ENCODE measurements at regions of chr21 and their contacts with region 1.

Region 1: DNA sequence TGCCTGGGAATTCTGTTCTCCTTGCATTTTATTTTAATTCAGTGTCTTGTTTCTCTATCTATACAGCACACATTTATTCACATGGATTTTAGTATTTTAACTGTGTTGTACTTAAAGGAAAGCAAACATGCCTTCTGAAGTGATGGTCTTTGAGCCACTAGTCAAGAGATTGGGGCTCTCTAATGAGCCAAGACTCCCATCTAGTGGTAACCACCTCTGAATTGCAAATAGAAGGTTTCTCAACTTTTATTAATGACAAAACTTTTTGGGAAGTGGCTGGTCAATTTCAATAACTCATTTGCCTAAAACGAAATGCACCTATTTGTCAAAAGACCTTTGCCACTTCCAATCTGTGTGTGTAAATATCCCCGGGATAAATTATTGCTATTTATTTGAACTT is 199.6 kb downstream of the LTN1 start:
- DNase-seq: peak; percentile 49
- ATAC-seq: peak; percentile 25; the same call in 1 of the 2 replicates
- H3K4me3 ChIP-seq: no peak overlapping the region
- H3K27ac ChIP-seq: no peak overlapping the region
- H3K4me1 ChIP-seq: peaks cover 23% of the 10 kb centered on the region
- H3K27me3 ChIP-seq: no peaks in the 10 kb centered on the region
- CTCF ChIP-seq: peak; percentile 66

Region 2: DNA sequence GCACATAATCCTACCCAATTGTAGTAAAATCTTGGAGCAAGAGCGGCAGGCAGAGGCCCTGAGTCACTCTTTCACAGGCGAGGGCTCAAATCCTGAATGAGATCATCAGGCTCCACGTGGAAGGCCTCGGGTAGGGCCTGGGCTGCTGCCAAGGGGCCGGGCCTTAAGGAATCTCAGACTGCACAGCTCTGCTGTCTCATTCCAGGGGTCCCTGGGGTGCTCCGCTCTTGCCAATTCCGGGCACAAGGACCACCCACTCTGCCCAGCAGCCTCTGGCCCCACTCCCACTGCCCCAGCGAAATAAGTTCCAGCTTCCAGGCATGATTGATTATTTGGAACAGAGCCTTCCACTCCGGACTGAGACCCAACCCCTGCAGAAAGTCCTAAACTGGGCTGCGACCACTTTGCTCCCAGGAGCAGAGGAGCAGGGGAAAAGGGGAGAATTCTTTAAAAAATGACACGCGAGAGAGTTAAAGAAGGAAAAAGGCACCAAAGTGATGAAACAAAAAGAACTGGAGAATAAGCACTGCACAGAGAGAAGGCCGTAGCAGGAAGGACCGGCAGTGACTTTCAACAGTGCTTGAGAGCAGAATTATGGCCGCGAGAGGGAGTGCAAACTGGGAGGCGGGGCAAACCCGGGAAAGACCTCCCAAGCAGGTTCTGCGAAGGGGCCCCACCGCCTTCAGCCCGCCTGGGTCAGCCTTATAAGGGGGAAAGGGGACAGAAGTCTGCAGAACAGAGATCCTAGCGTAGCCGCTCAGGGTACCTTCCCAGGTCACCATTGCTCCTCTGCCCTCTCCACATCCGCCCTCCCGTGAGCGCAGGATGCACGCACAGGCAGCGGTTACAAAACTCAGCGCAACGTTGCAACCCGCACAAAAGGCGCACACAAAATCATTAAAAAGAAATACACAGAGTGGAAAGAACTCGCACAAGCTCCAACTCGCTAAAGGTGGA is 1949.8 kb before region 1 on chr21:
- CTCF ChIA-PET with region 1: no interaction called
- POLR2A ChIA-PET with region 1: no interaction called
- intact Hi-C with region 1: loop called (anchors 5 kb)
- DNase-seq: peak; percentile 96
- ATAC-seq: peak; percentile 58
- H3K4me3 ChIP-seq: peak overlapping the region; percentile 78
- H3K27ac ChIP-seq: peak overlapping the region; percentile 66
- H3K4me1 ChIP-seq: peaks cover 17% of the 10 kb centered on the region
- H3K27me3 ChIP-seq: no peaks in the 10 kb centered on the region
- CTCF ChIP-seq: 0 out of 2 replicates have a peak, but pooled peaks have one; percentile 35

Region 3: GRCh38 chr21:28633839-28634555 is 159.0 kb before region 1 on chr21:
- CTCF ChIA-PET with region 1: no interaction called
- POLR2A ChIA-PET with region 1: no interaction called
- intact Hi-C with region 1: loop called (anchors 5 kb)
- DNase-seq: peak; percentile 91
- ATAC-seq: peak; percentile 31
- H3K4me3 ChIP-seq: peak overlapping the region; percentile 11; the same call in 1 of the 2 replicates
- H3K27ac ChIP-seq: peak overlapping the region; percentile 97
- H3K4me1 ChIP-seq: peaks cover 70% of the 10 kb centered on the region
- H3K27me3 ChIP-seq: no peaks in the 10 kb centered on the region
- CTCF ChIP-seq: no peak

Region 4: GRCh38 chr21:28832013-28832714 is 39.1 kb after region 1 on chr21:
- CTCF ChIA-PET with region 1: no interaction called
- POLR2A ChIA-PET with region 1: no interaction called
- intact Hi-C with region 1: loop called (anchors 2 kb)
- DNase-seq: peak; percentile 83
- ATAC-seq: peak; percentile 94
- H3K4me3 ChIP-seq: no peak overlapping the region
- H3K27ac ChIP-seq: peak overlapping the region; percentile 27
- H3K4me1 ChIP-seq: peaks cover 31% of the 10 kb centered on the region
- H3K27me3 ChIP-seq: no peaks in the 10 kb centered on the region
- CTCF ChIP-seq: no peak

Region 5: DNA sequence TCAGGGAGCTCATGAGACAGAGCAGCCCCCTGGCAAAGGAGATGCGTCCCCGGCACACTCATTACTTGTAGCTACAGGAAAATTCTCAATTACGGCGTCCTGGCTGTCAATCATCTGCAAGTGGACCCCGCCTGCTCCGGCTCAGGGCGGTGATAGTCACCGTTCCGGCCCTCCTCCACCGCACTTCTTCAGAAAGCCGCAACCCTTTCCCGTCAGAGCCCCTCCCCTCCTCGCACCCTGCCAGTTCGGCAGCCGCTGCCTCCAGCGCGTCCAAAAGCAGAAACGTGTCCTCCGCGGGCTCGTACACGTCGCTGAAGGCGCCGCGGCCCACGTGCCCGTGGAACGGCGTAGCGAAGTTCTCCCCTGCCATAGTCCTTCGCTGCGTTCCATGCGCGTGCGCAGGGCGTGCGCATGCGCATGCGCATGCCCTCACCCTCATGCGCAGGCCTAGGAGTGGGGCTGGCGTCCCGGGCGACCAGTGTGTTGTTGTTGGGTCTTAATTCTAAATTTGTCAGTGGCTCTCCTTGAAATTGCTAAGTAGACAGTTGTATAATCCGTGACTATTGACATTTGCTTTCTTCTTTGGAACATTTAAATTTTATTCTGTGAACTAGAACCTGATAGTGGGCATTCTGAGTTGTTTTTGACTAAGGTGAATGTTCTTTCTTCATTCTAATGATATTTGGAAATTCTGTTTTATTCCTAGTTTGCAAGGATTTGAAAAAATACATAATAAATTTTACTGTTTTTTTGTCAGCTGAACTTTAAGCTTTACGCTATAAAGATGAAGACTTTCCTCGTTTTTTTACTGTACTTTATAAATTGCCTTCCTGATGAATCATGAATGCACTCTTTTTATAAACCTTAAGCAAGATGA is 92.2 kb after region 1 on chr21:
- CTCF ChIA-PET with region 1: no interaction called
- POLR2A ChIA-PET with region 1: no interaction called
- intact Hi-C with region 1: loop called (anchors 1 kb)
- DNase-seq: peak; percentile 96
- ATAC-seq: peak; percentile 96
- H3K4me3 ChIP-seq: peak overlapping the region; percentile 72
- H3K27ac ChIP-seq: peak overlapping the region; percentile 87
- H3K4me1 ChIP-seq: peaks cover 16% of the 10 kb centered on the region; the same call in 1 of the 2 replicates
- H3K27me3 ChIP-seq: no peaks in the 10 kb centered on the region
- CTCF ChIP-seq: no peak

Region 6: DNA sequence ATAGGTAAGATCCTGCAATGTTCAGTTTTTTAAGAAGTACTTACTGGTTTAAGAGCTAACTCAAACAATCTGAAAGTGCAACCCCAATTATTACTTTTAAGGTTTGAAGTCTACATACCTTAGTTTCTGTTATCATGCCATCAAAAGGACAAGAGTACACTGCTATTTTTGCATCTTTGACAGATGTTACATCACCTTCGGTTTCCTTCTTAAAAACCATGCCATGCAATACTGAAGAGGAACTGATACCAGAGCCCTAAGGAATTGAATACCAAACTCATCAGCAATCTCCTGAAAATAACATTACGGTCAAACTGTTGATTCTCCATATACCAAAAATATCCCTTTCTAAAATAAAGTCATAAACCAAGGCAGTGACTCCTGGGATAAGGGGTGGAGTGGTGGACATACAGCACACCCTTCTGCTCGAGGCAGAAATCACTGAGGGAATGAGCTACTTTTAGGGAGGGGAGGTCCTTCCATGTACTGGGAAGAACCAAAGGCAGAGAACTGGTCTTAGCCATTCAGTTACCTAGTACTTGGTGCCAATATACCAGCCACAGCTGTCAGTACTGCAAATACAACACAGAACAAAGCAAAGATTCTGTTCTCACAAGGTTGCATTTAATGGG is 271.9 kb after region 1 on chr21:
- CTCF ChIA-PET with region 1: no interaction called
- POLR2A ChIA-PET with region 1: no interaction called
- intact Hi-C with region 1: no loop called
- DNase-seq: no peak
- ATAC-seq: no peak
- H3K4me3 ChIP-seq: no peak overlapping the region
- H3K27ac ChIP-seq: no peak overlapping the region
- H3K4me1 ChIP-seq: no peaks in the 10 kb centered on the region
- H3K27me3 ChIP-seq: no peaks in the 10 kb centered on the region
- CTCF ChIP-seq: no peak

Measured in PC-3 (cell line).